AG04450 (cell line): ENCODE measurements at regions of chr5 and their contacts with region 1.

Region 1: GRCh38 chr5:16552666-16553343 is 64.0 kb downstream of the RETREG1 start:
- DNase-seq: no peak
- H3K4me3 ChIP-seq: no peak overlapping the region
- H3K27ac ChIP-seq: no peak overlapping the region
- H3K27me3 ChIP-seq: peaks cover 6% of the 10 kb centered on the region
- CTCF ChIP-seq: peak; percentile 93

Region 2: DNA sequence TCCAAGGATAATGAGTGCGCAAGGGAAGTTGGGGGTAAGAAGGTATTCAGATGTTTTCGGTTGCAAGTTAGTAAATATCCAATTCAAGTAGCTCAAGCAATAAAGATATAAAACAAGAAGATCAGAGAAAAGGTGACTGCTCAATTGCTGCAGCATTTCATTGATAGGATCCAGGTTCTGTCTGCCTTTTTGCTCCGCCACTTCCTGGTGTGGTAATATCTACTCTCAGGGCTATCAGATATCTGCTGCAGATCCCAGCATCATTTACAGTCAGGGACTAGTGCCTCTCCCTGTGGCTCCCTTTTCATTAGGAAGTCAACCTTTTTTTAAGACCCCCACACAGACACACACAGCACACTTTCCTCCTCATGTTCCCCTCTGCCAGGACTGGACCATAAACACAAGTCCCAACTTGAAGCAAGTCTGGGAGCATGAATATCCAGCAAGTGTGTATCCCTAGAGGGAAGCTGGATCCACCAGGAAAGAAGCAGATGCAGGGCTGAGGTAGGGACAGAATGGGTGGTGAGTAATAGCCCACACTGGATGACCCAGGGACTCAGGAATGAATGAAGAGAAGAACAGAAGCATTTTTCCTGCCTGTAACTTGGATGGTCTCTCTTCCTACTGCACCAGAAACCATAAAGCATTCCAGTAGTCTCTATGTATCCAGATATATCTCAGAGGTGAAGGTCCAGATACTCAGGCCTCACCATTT is 140.9 kb before region 1 on chr5:
- CTCF ChIA-PET with region 1: no interaction called
- POLR2A ChIA-PET with region 1: no interaction called
- DNase-seq: no peak
- H3K4me3 ChIP-seq: no peak overlapping the region
- H3K27ac ChIP-seq: no peak overlapping the region
- H3K27me3 ChIP-seq: peaks cover 2% of the 10 kb centered on the region
- CTCF ChIP-seq: no peak

Region 3: GRCh38 chr5:16542249-16542648 is 10.6 kb before region 1 on chr5:
- CTCF ChIA-PET with region 1: interaction called, 15 read pairs
- POLR2A ChIA-PET with region 1: no interaction called
- DNase-seq: no peak
- H3K4me3 ChIP-seq: no peak overlapping the region
- H3K27ac ChIP-seq: no peak overlapping the region
- H3K27me3 ChIP-seq: peaks cover 6% of the 10 kb centered on the region
- CTCF ChIP-seq: no peak

Region 4: GRCh38 chr5:16574789-16575721 is 22.2 kb after region 1 on chr5:
- CTCF ChIA-PET with region 1: interaction called, 17 read pairs
- POLR2A ChIA-PET with region 1: no interaction called
- DNase-seq: peak; percentile 47
- H3K4me3 ChIP-seq: no peak overlapping the region
- H3K27ac ChIP-seq: peak overlapping the region; percentile 39
- H3K27me3 ChIP-seq: no peaks in the 10 kb centered on the region
- CTCF ChIP-seq: no peak

Region 5: DNA sequence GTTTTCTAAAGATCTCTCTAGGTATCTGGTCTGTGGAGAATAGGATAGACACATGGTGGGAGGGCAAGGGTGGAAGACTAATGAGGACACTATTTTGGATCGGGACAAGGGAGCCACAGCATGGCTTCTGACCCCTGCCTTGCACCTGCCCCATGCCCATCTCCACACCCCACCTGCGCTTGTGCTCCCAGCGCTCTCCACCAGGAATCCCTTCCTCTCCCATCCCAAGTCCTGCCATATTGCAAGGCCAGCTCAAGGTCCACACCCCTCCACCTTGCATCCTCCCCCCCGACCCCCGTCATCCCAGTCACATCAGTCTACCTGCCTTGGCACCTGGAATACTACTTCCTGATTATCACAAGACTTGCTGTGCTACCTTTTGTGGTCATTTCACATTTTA is 108.2 kb after region 1 on chr5:
- CTCF ChIA-PET with region 1: no interaction called
- POLR2A ChIA-PET with region 1: no interaction called
- DNase-seq: no peak
- H3K4me3 ChIP-seq: no peak overlapping the region
- H3K27ac ChIP-seq: no peak overlapping the region
- H3K27me3 ChIP-seq: peaks cover 2% of the 10 kb centered on the region
- CTCF ChIP-seq: no peak

Region 6: GRCh38 chr5:17004441-17005106 is 451.8 kb after region 1 on chr5:
- CTCF ChIA-PET with region 1: no interaction called
- POLR2A ChIA-PET with region 1: no interaction called
- DNase-seq: no peak
- H3K4me3 ChIP-seq: no peak overlapping the region
- H3K27ac ChIP-seq: no peak overlapping the region
- H3K27me3 ChIP-seq: no peaks in the 10 kb centered on the region
- CTCF ChIP-seq: no peak

Region 7: GRCh38 chr5:17019324-17019723 is 466.5 kb after region 1 on chr5:
- CTCF ChIA-PET with region 1: no interaction called
- POLR2A ChIA-PET with region 1: no interaction called
- DNase-seq: no peak
- H3K4me3 ChIP-seq: no peak overlapping the region
- H3K27ac ChIP-seq: peak overlapping the region; percentile 21
- H3K27me3 ChIP-seq: no peaks in the 10 kb centered on the region
- CTCF ChIP-seq: no peak